Activated CD4-positive, alpha-beta T cell treated with anti-CD3 and anti-CD28 coated beads for 36 hours (primary cell): ENCODE measurements at regions of chr11 and their contacts with region 1.

Region 1: GRCh38 chr11:62591448-62592145 is at the start of gene TUT1:
- DNase-seq: peak; percentile 97
- ATAC-seq: peak; percentile 93
- H3K4me3 Mint-ChIP-seq: peak within 1 kb of the TSS; percentile 99
- H3K27ac Mint-ChIP-seq: peak within 1 kb of the TSS; percentile 99
- H3K4me1 Mint-ChIP-seq: peaks cover 47% of the 10 kb centered on the region
- H3K27me3 Mint-ChIP-seq: no peaks in the 10 kb centered on the region
- total RNA-seq, gene TUT1: 32.5 to 36.0 TPM

Region 2: GRCh38 chr11:62427630-62428233 is 163.9 kb before region 1 on chr11:
- CTCF ChIA-PET with region 1: interaction called, 21 read pairs
- POLR2A ChIA-PET with region 1: interaction called, 7 read pairs
- intact Hi-C with region 1: no loop called
- DNase-seq: peak; percentile 36
- ATAC-seq: peak; percentile 63
- H3K4me3 Mint-ChIP-seq: peak overlapping the region; percentile 5
- H3K27ac Mint-ChIP-seq: peak overlapping the region; percentile 70
- H3K4me1 Mint-ChIP-seq: peaks cover 29% of the 10 kb centered on the region
- H3K27me3 Mint-ChIP-seq: no peaks in the 10 kb centered on the region

Region 3: DNA sequence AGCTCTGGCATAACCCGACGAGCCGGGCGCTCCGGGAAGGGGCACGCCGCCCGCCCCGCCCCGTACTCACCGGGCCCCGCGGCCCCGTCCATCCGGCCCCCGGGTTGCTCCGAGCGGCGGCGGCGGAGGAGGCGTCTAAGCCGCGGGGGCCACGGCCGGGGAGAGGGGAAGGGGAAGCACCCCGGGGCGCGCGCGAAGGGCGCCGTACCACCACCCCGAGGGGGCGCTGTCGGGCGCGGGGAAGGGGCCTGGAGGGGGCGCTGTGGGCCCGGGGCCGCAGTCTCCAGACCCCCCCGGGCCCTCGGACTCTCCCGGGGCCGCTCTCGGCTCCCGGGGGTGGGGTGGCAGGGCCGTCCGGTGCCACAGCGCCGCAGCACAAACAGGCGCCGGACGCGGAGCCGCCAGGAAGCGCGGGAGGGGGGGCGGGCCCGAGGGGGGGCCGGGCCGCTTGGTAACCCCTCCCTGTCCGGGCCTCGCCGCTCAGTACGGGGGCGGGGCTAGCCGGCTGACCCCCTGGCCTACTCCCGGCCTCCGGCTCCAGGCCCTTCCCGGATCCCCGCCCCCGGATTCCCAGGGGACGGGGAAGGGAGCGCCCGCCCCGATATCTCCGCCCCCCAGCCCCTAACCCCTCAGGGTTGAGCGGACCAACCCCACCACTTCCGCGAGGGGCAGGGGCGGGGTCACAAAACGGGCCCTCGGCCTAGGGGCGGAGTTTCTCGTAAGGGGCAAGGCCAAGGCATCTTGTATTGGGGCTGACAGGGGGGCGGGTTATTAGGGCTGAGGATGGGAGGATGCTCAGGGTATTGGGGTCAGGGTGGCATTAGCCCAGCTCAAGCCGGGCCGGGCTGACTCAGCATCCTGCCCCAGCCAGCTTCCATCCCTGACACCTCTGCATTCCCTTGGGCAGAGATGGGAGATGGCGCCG is 21.0 kb after region 1 on chr11 and contains the starts of genes EML3 and ROM1:
- CTCF ChIA-PET with region 1: interaction called, 19 read pairs
- POLR2A ChIA-PET with region 1: interaction called, 21 read pairs
- intact Hi-C with region 1: loop called in 1 of 2 experiments (anchors 1 kb)
- DNase-seq: peak; percentile 91
- ATAC-seq: peak; percentile 78
- H3K4me3 Mint-ChIP-seq: peak within 1 kb of the TSS; percentile 91
- H3K27ac Mint-ChIP-seq: peak within 1 kb of the TSS; percentile 90
- H3K4me1 Mint-ChIP-seq: peaks cover 37% of the 10 kb centered on the region
- H3K27me3 Mint-ChIP-seq: no peaks in the 10 kb centered on the region
- total RNA-seq, gene EML3: 101 to 112 TPM
- total RNA-seq, gene ROM1: 1.5 to 1.9 TPM

Region 4: DNA sequence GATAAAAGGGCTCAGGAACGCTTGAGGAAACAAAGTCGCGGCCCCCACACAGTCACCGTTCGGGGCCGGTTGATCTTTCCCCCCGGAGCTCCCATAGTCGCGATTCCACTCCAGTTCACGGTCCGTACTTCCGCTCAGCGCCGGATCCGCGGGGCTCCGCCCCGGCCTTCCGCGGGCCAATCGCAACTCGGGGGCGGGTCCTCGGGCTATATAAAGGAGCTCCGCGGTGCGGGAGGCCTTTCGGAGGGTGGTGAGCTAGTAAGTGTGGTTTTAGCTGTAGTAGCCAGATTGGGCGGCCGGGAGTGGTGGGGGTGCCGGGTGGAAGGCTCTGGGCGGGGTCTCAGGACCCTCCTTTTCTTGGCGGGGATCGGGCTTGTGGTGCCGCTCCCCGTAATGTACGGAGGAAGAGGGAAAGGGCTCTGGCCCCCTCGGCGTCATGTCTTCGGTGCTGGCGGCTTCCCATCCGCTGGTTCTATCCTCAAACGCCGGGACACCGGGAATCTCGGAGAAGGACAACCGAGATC is 73.5 kb after region 1 on chr11 and contains the starts of genes C11orf98 and CSKMT:
- CTCF ChIA-PET with region 1: interaction called, 20 read pairs
- POLR2A ChIA-PET with region 1: interaction called, 38 read pairs
- intact Hi-C with region 1: loop called (anchors 1 to 2 kb)
- DNase-seq: peak; percentile 97
- ATAC-seq: peak; percentile 90
- H3K4me3 Mint-ChIP-seq: peak within 1 kb of the TSS; percentile 93
- H3K27ac Mint-ChIP-seq: peak within 1 kb of the TSS; percentile 89
- H3K4me1 Mint-ChIP-seq: peaks cover 38% of the 10 kb centered on the region
- H3K27me3 Mint-ChIP-seq: no peaks in the 10 kb centered on the region
- total RNA-seq, gene C11orf98: 108 to 135 TPM
- total RNA-seq, gene CSKMT: 12.6 to 31.3 TPM

Region 5: GRCh38 chr11:62705880-62706849 is 114.6 kb after region 1 on chr11:
- CTCF ChIA-PET with region 1: interaction called, 6 read pairs
- POLR2A ChIA-PET with region 1: interaction called, 11 read pairs
- intact Hi-C with region 1: loop called (anchors 1 to 5 kb)
- DNase-seq: peak; percentile 98
- ATAC-seq: peak; percentile 72
- H3K4me3 Mint-ChIP-seq: peak overlapping the region; percentile 82
- H3K27ac Mint-ChIP-seq: peak overlapping the region; percentile 51
- H3K4me1 Mint-ChIP-seq: peaks cover 46% of the 10 kb centered on the region
- H3K27me3 Mint-ChIP-seq: no peaks in the 10 kb centered on the region

Region 6: GRCh38 chr11:62737196-62737595 is 145.6 kb after region 1 on chr11:
- CTCF ChIA-PET with region 1: no interaction called
- POLR2A ChIA-PET with region 1: no interaction called
- intact Hi-C with region 1: no loop called
- DNase-seq: no peak
- ATAC-seq: no peak
- H3K4me3 Mint-ChIP-seq: no peak overlapping the region
- H3K27ac Mint-ChIP-seq: no peak overlapping the region
- H3K4me1 Mint-ChIP-seq: peaks cover 7% of the 10 kb centered on the region
- H3K27me3 Mint-ChIP-seq: no peaks in the 10 kb centered on the region

Region 7: GRCh38 chr11:62831520-62832335 is 240.1 kb after region 1 on chr11 and contains the start of gene STX5:
- CTCF ChIA-PET with region 1: no interaction called
- POLR2A ChIA-PET with region 1: interaction called, 13 read pairs
- intact Hi-C with region 1: loop called in 1 of 2 experiments (anchors 2 kb)
- DNase-seq: peak; percentile 100
- ATAC-seq: peak; percentile 95
- H3K4me3 Mint-ChIP-seq: peak within 1 kb of the TSS; percentile 84
- H3K27ac Mint-ChIP-seq: peak within 1 kb of the TSS; percentile 99
- H3K4me1 Mint-ChIP-seq: peaks cover 38% of the 10 kb centered on the region
- H3K27me3 Mint-ChIP-seq: no peaks in the 10 kb centered on the region
- total RNA-seq, gene STX5: 19.3 to 21.8 TPM

Region 8: GRCh38 chr11:62880803-62881578 is 289.4 kb after region 1 on chr11 and contains the start of gene SLC3A2:
- CTCF ChIA-PET with region 1: interaction called, 4 read pairs
- POLR2A ChIA-PET with region 1: interaction called, 6 read pairs
- intact Hi-C with region 1: loop called in 1 of 2 experiments (anchors 1 kb)
- DNase-seq: peak; percentile 94
- ATAC-seq: peak; percentile 75
- H3K4me3 Mint-ChIP-seq: peak within 1 kb of the TSS; percentile 99
- H3K27ac Mint-ChIP-seq: peak within 1 kb of the TSS; percentile 100
- H3K4me1 Mint-ChIP-seq: peaks cover 44% of the 10 kb centered on the region
- H3K27me3 Mint-ChIP-seq: no peaks in the 10 kb centered on the region
- total RNA-seq, gene SLC3A2: 401 to 402 TPM